ENCODE measurements at regions of chr1 and their contacts with region 1.

Region 1: GRCh38 chr1:43650310-43651085 is 549 bp downstream of the KDM4A start:
- DNase-seq: peak; percentile 97
- H3K4me3 Mint-ChIP-seq: peak overlapping the region; percentile 90
- H3K27ac Mint-ChIP-seq: peak overlapping the region; percentile 99
- H3K4me1 Mint-ChIP-seq: peaks cover 26% of the 10 kb centered on the region
- H3K27me3 Mint-ChIP-seq: no peaks in the 10 kb centered on the region

Region 2: DNA sequence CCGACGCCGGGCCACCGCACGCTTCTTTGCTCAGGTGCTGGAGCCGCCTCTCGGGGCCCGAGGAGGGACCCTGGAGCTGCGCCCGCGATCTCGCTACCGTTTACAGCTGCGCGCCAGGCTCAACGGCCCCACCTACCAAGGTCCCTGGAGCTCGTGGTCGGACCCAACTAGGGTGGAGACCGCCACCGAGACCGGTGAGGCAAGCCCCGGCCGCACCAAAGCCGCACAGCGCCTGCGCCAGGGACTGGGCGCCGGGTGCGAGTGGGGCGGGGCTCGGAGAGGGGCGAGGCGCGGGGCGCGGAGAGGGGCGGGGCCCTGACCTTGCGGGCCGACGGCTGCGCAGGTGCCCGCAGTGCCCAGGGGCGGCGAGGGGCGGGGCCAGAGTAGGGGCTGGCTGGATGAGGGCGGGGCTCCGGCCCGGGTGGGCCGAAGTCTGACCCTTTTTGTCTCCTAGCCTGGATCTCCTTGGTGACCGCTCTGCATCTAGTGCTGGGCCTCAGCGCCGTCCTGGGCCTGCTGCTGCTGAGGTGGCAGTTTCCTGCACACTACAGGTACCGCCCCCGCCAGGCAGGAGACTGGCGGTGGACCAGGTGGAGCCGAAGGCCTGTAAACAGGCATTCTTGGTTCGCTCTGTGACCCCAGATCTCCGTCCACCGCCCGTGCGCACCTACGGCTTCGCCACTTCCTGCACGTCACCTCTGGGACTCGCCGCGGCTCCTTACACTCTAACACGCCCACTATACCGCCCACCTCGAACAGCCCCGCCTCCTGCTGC is 301.5 kb before region 1 on chr1:
- CTCF ChIA-PET with region 1: no interaction called
- intact Hi-C with region 1: loop called (anchors 1 kb)
- DNase-seq: peak; percentile 79
- H3K4me3 Mint-ChIP-seq: peak overlapping the region; percentile 74
- H3K27ac Mint-ChIP-seq: peak overlapping the region; percentile 77
- H3K4me1 Mint-ChIP-seq: peaks cover 6% of the 10 kb centered on the region
- H3K27me3 Mint-ChIP-seq: no peaks in the 10 kb centered on the region

Region 3: DNA sequence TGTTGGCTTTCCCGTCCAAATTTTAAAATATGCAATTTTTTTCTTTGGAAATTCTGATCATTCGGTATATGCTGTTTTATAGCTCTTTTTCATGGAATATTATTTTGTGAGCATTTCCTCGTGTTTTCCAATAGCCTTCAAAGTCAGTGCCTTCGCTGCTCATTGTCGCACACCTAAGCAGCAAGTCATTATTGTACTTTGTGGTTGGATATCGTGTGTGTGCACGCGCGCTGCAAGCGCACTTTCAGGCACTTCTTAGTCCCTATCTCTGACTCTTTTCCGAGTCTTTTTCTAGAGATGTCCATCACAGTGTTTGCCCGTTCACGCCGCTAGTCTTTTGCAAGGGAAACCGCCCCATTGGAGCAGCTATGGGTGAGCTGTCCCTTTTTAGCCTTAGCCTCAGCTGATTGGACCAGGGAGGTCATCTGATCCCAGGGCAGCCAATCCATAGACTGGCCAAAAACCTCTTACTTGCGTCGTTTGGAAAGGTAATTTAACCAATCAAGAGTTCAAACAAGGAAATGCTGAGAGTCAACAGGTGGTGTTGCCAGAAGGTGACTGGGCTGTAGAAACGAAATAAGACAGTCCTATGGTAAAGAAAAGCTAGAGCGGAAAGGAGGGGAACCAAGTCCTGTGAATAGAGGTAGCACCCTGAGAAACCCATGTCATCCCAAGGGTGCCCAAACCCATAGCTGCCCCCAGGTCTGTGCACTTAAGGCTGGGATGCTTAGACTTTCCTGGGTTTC is 196.1 kb before region 1 on chr1:
- CTCF ChIA-PET with region 1: no interaction called
- intact Hi-C with region 1: loop called (anchors 10 kb)
- DNase-seq: peak; percentile 77
- H3K4me3 Mint-ChIP-seq: peak overlapping the region; percentile 83
- H3K27ac Mint-ChIP-seq: peak overlapping the region; percentile 81
- H3K4me1 Mint-ChIP-seq: peaks cover 13% of the 10 kb centered on the region
- H3K27me3 Mint-ChIP-seq: peaks cover 13% of the 10 kb centered on the region

Region 4: DNA sequence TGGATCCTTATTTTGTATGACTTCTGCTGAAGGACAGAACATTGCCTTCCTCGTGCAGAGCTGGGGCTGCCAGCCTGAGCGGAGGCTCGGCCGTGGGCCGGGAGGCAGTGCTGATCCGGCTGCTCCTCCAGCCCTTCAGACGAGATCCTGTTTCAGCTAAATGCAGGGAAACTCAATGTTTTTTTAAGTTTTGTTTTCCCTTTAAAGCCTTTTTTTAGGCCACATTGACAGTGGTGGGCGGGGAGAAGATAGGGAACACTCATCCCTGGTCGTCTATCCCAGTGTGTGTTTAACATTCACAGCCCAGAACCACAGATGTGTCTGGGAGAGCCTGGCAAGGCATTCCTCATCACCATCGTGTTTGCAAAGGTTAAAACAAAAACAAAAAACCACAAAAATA is 28.0 kb before region 1 on chr1:
- CTCF ChIA-PET with region 1: no interaction called
- intact Hi-C with region 1: no loop called
- DNase-seq: no peak
- H3K4me3 Mint-ChIP-seq: no peak overlapping the region
- H3K27ac Mint-ChIP-seq: no peak overlapping the region
- H3K4me1 Mint-ChIP-seq: no peaks in the 10 kb centered on the region
- H3K27me3 Mint-ChIP-seq: no peaks in the 10 kb centered on the region

Region 5: GRCh38 chr1:43688594-43689000 is 38.1 kb after region 1 on chr1:
- CTCF ChIA-PET with region 1: no interaction called
- intact Hi-C with region 1: no loop called
- DNase-seq: no peak
- H3K4me3 Mint-ChIP-seq: no peak overlapping the region
- H3K27ac Mint-ChIP-seq: no peak overlapping the region
- H3K4me1 Mint-ChIP-seq: no peaks in the 10 kb centered on the region
- H3K27me3 Mint-ChIP-seq: no peaks in the 10 kb centered on the region

Region 6: DNA sequence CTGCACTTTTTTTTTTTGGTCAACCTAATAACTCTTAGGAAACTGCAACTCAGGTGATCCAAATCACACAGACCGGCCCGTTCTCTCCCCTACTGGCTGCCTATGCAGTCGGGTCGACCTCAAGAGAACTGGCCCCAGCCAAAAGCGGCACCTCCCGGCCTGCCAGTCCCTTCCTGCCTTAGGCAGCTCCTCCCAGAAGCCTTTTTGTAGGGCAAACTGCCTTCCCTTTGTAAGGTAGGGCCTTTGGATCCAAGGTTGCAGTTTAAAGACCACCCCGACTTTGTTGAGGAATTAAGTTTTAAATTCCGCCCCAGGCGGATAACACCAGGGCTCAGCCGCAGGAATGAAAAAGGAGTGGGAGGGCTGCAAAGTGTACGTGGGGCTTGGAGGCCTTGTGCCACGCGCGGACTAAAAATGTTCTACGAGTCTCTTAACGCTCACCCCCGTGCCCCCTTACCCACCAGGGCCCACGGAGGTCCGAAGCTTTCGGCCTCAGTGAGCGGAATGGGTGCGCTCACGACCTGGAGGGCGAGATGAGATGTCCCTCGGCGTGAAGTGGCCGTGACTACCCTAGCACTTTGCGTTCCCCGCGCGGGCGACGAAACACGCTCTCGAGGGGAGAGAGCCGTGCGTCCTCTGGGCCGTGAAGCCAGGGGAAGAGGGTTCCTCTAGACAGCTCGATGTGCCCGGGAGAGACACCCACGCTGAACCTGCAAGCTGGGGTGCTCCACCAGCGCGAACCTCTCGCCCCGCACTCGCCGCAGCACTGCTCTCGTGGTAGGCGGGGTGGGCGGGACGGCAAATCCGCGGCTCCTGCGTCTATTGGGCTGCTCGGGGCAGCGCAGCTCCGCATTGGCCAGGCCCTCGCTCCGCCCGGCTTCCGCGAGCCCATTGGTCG is 56.3 kb after region 1 on chr1:
- CTCF ChIA-PET with region 1: no interaction called
- intact Hi-C with region 1: loop called (anchors 1 kb)
- DNase-seq: peak; percentile 94
- H3K4me3 Mint-ChIP-seq: peak overlapping the region; percentile 86
- H3K27ac Mint-ChIP-seq: peak overlapping the region; percentile 53
- H3K4me1 Mint-ChIP-seq: peaks cover 30% of the 10 kb centered on the region
- H3K27me3 Mint-ChIP-seq: no peaks in the 10 kb centered on the region

Region 7: GRCh38 chr1:43974443-43975248 is 324.1 kb after region 1 on chr1 and contains the start of gene ATP6V0B:
- CTCF ChIA-PET with region 1: no interaction called
- intact Hi-C with region 1: loop called (anchors 1 kb)
- DNase-seq: peak; percentile 97
- H3K4me3 Mint-ChIP-seq: peak within 1 kb of the TSS; percentile 85
- H3K27ac Mint-ChIP-seq: peak within 1 kb of the TSS; percentile 75
- H3K4me1 Mint-ChIP-seq: peaks cover 50% of the 10 kb centered on the region
- H3K27me3 Mint-ChIP-seq: no peaks in the 10 kb centered on the region
- total RNA-seq, gene ATP6V0B: 44.2 to 52.6 TPM

Region 8: DNA sequence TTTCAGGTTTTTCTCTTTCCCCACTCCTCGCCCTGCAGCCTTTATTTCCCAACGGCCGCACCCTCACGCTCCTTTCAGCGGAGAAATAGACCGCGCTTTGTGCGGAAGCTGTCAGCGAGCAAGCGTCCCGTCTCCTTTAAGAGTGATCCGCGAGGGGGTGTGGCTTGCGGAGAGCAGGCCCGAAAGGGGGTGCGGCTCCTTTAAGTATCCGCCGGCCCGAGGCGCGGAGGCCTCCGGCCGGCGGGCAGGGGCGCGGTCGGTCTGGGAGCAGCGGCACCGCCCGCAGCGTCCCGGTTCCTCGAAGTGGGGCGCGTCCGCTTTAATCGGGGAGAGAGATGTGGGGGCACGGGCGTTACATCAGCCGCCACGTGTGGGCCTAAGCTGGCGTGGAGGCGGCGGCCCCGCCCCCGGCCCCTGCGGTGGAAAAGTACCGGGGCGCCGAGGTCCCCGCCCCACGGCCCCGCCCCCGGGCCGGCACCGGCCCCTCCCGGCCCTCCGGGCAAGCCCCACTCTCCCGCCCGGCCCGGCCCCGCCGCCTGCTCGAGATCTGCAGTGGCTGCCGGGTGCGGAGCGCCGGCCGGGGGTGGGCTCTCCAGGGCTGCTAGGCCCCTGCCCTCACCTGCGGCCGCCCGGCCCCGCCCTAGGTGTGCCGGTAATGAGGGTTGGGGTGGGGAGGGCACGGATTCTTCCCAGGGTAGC is 379.6 kb after region 1 on chr1:
- CTCF ChIA-PET with region 1: no interaction called
- intact Hi-C with region 1: loop called (anchors 1 kb)
- DNase-seq: peak; percentile 93
- H3K4me3 Mint-ChIP-seq: peak overlapping the region; percentile 92
- H3K27ac Mint-ChIP-seq: peak overlapping the region; percentile 93
- H3K4me1 Mint-ChIP-seq: peaks cover 25% of the 10 kb centered on the region
- H3K27me3 Mint-ChIP-seq: no peaks in the 10 kb centered on the region

Measured in activated naive CD4-positive, alpha-beta T cell treated with anti-CD3 and anti-CD28 coated beads for 36 hours (primary cell).